Colonic mucosa (tissue), 4 donors: ENCODE measurements at regions of chr2 and their contacts with region 1.

Region 1: GRCh38 chr2:199994371-199994770 is 39.0 kb downstream of the MAIP1 start:
- DNase-seq: no peak
- H3K4me3 ChIP-seq: no peak overlapping the region
- H3K27ac ChIP-seq: no peak overlapping the region
- H3K4me1 ChIP-seq: no peaks in the 10 kb centered on the region
- H3K27me3 ChIP-seq: no peaks in the 10 kb centered on the region
- CTCF ChIP-seq: no peak

Region 2: DNA sequence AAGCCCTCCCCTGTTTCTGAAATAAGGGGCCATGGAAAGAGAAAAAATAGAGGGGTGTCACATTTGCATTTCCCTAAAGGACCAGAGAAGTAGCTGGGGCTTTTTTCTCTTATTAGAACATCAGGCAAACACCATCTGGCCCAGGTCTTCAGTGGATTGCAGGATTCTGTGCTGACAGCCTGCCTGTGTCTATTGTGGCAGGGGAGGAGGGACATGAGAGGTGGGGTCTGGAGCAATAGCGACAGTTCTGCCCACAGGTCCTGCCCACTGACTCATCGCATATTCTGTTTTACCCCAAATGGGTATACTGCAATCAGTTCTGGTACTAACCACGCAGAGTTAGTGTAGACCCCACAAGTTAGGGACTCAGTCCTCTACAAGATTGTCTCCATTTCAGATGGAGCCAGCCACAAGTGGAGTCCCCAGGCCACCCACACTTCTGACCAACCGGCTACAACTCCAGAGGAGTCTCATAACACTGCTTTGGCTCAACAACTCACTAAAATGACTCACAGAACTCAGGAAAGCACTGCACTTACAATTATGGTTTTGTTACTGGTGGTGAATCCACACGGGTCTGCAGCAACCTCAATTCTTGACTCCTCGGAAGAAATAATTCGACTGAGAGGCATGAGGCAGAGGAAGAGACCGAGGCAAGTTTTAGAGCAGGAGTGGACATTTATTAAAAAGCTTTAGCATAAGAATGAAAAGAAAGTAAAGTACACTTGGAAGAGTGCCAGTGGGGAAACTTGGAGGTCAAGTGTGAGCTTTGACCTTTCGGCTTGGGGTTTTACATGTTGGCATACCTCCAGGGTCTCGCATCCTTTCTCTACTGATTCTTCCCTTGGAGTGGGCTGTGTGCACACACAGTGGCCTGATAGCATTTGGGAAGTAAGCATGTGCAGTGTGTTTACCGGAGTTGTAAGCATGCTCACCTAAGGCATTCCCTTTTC is 165.7 kb after region 1 on chr2:
- intact Hi-C with region 1: loop called (anchors 10 kb)
- DNase-seq: no peak
- H3K4me3 ChIP-seq: no peak overlapping the region
- H3K27ac ChIP-seq: no peak overlapping the region
- H3K4me1 ChIP-seq: no peaks in the 10 kb centered on the region
- H3K27me3 ChIP-seq: no peaks in the 10 kb centered on the region
- CTCF ChIP-seq: no peak

Region 3: DNA sequence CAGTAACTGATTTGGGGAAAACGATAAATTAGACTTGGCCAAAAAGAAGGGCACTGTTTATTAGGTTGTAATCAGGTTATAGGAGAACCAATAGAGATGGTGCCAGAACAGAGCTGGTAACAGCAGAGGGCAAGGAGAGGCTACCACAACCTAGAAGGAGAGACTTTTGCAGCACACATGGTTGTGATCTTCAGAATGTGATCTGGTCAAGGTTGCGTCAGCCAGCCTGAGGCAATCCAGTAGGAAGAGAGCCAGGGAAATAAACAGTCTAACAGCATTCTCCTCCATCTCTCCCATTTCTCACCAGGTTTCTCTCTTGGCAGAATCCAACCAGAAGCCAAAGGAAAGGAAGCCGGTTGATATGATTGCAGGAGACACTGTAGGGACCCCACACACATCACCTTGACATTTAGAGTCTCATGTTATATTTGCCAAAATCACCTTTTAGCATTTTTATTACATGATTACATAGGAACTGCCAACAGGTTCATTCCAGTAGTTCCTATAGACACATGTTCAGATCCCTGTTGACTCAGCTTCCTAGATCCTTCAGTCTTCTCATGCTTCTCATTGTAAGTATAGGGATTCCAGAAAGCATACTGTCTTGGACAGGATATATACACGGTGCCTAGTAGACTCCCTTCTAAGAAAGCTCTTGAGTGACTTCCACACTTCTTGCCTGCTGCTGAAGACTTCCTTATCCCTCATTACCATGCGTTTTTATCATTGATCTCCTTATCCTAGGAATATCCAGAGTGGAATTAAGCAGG is 294.5 kb after region 1 on chr2:
- intact Hi-C with region 1: no loop called
- DNase-seq: no peak
- H3K4me3 ChIP-seq: no peak overlapping the region
- H3K27ac ChIP-seq: no peak overlapping the region
- H3K4me1 ChIP-seq: no peaks in the 10 kb centered on the region
- H3K27me3 ChIP-seq: no peaks in the 10 kb centered on the region
- CTCF ChIP-seq: no peak